ENCODE measurements at regions of chr6 and their contacts with region 1.

Region 1: DNA sequence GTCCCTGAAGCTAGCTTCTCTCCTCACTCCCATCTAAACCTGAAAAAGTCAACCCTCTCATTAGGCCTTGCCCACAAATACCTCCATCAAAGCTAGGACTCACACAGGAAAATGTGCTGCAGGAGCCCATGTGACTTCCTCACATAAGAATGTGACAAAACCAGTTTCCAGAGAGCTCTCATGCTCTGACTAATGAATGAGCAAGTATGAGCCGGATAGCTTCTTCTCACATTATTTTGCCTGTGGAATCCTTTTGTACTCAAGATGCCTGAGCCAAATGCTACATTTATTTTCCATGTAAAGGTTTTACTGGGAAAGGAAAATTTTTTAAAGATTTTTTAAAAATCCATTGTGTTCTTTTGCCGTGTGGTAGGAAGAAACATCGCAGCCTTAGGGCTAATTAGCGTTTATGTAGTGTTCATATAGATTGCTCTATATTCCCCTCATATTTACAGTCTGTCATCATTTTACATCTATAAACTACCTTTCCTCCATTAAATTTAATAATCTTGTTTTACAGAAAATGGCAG is 68.6 kb upstream of the CCN6 start:
- DNase-seq: no peak
- H3K4me3 ChIP-seq: no peak overlapping the region
- H3K27ac ChIP-seq: no peak overlapping the region
- H3K4me1 ChIP-seq: peaks cover 0 to 26% (median 12%) of the 10 kb centered on the region in 6 donors
- H3K27me3 ChIP-seq: no peaks in the 10 kb centered on the region
- CTCF ChIP-seq: no peak
- POLR2A ChIP-seq: no peak

Region 2: DNA sequence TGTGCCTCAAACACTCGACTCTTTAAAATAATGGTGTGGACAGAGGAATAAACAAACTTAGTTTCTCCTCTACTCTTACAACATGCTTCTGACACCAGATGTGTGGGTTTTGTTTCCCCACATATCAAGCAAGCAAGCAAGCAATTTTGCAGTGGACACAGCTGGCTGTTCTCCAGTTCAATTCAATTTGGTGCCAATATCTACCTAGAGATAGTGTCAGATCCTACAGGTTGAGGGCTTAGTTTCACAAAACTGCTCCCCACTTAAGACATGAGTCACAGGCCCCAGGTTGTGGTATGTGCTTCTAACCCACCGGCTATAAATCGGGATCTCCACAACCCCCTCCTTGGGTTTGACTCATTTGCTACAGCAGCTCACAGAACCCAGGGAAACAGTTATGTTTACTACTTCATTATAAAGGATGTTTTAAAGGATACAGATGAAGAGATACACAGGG is 248.2 kb before region 1 on chr6:
- intact Hi-C with region 1: no loop called
- DNase-seq: no peak
- H3K4me3 ChIP-seq: no peak overlapping the region
- H3K27ac ChIP-seq: peak overlapping the region in 3 of 8 donors; percentile 46 to 75 (median 46)
- H3K4me1 ChIP-seq: peaks cover 17 to 100% (median 88%) of the 10 kb centered on the region in 6 donors
- H3K27me3 ChIP-seq: no peaks in the 10 kb centered on the region
- CTCF ChIP-seq: no peak
- POLR2A ChIP-seq: no peak

Region 3: DNA sequence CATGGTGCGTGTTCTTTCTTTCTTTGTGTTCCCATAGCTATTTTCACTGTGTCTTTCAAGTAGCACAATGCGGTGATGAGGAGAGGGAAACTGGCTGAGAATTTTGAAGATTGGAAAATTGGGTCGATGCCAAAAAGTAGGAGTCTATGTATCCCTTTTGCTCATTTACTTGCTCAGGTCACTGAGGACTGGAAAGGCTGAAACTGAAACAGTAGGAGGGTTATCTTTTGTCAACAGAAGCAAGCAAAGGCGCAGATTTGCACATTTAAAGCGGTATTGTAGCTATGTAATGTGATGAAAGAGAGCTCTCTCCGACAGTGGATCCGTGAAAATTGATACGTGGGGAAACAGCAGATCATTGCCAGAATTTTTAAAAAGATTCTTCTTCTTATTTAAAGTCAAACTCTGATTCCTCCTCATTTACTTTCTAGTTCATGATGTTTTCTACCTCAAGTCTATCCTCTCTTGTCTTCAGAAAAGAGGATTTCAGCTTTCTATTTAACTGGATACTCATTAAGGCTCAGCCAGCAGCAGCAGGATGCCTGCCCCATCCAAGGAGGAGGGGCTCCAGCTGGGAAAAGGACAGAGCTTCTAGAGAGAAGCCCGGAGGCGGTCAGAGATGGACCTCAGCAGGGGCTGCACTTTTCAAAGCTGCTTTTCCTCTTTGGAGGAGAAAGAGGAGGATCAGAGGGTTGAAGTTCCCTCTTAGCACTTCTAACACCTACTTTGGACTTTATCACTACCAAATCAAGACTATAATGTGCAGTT is 96.2 kb before region 1 on chr6:
- intact Hi-C with region 1: loop called (anchors 10 kb)
- DNase-seq: no peak
- H3K4me3 ChIP-seq: no peak overlapping the region
- H3K27ac ChIP-seq: no peak overlapping the region
- H3K4me1 ChIP-seq: no peaks in the 10 kb centered on the region
- H3K27me3 ChIP-seq: no peaks in the 10 kb centered on the region
- CTCF ChIP-seq: no peak
- POLR2A ChIP-seq: no peak

Region 4: GRCh38 chr6:111911428-111911827 is 73.8 kb before region 1 on chr6:
- intact Hi-C with region 1: no loop called
- DNase-seq: no peak
- H3K4me3 ChIP-seq: no peak overlapping the region
- H3K27ac ChIP-seq: no peak overlapping the region
- H3K4me1 ChIP-seq: no peaks in the 10 kb centered on the region
- H3K27me3 ChIP-seq: no peaks in the 10 kb centered on the region
- CTCF ChIP-seq: no peak
- POLR2A ChIP-seq: no peak

Measured in spleen (tissue), 13 donors.